Aorta (tissue), 5 donors: ENCODE measurements at regions of chr7 and their contacts with region 1.

Region 1: GRCh38 chr7:154927624-154928143 is 75.2 kb downstream of the PAXIP1 start:
- DNase-seq: peak in 1 of 2 donors; percentile 81
- ATAC-seq: peak; percentile 90
- H3K4me3 ChIP-seq: peak overlapping the region; percentile 71 to 83
- H3K27ac ChIP-seq: peak overlapping the region; percentile 9 to 90
- H3K4me1 ChIP-seq: no peaks in the 10 kb centered on the region
- H3K27me3 ChIP-seq: no peaks in the 10 kb centered on the region

Region 2: DNA sequence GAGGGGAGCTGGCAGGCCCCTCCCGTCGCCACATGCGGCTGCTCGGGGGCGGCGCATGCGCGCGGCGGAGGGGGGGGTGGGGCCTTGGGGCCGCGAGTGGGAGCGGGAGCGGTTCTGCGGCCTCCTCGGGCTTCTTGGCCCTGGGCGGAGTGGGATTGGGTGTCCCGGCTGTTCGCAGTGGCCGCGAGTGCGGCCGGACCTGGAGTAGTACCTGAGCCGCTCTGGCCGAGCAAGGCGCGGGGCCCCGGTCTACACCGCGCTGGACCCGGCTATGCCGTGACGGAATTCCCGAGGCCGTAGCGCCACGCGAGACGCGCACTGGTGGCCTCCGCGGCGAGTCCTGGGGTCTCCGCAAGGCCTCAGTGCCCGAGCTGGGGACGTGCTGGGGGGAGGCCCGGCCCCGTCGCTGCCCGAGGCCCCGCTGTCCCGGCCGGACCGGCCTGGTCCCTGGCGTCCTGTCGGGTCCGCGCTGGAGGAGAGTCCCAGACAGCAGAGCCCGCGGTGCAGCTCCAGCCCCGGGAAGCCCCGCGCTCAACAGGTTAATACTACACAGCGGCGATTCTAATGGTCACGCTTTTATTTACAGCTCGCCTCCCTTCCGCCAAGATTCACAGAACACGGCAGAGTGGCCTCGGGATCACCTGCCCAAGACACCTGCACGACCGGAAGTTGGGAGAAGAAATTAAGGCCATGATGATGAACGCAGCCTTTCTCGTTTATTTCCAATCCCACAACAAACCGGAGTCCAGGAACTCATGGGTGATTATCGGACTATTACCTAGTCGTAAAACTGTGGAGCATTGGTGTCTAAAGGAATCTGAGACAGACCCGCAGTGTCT is 75.9 kb after region 1 on chr7:
- intact Hi-C with region 1: loop called (anchors 5 kb)
- DNase-seq: peak; percentile 85 to 91
- ATAC-seq: peak; percentile 98
- H3K4me3 ChIP-seq: peak overlapping the region; percentile 95 to 96
- H3K27ac ChIP-seq: peak overlapping the region in 1 of 2 donors; percentile 43
- H3K4me1 ChIP-seq: no peaks in the 10 kb centered on the region
- H3K27me3 ChIP-seq: no peaks in the 10 kb centered on the region

Region 3: GRCh38 chr7:155043756-155044155 is 116.1 kb after region 1 on chr7:
- intact Hi-C with region 1: no loop called
- DNase-seq: no peak
- ATAC-seq: no peak
- H3K4me3 ChIP-seq: no peak overlapping the region
- H3K27ac ChIP-seq: no peak overlapping the region
- H3K4me1 ChIP-seq: no peaks in the 10 kb centered on the region
- H3K27me3 ChIP-seq: no peaks in the 10 kb centered on the region

Region 4: DNA sequence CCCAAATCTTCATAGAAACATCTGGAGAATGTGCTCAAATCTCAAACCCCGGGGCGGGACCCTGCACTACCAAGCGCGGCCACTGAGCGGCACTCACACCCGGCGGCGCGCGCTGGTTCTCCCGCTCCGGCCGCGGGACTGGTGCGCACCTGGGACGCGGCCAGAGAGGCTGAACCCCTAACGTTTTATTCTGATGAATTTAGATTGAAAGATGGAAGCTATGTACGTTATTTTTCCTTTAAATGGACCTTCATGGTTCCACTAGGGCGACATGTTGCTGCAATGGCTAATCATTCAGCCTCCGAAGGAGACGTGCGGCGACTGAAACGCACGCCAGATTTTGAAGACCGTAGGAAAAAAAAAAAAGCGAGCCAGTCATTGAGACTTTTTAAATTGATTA is 263.0 kb after region 1 on chr7:
- intact Hi-C with region 1: loop called in 1 of 2 experiments (anchors 10 kb)
- DNase-seq: peak in 1 of 2 donors; percentile 89
- ATAC-seq: peak; percentile 78
- H3K4me3 ChIP-seq: no peak overlapping the region
- H3K27ac ChIP-seq: no peak overlapping the region
- H3K4me1 ChIP-seq: no peaks in the 10 kb centered on the region
- H3K27me3 ChIP-seq: no peaks in the 10 kb centered on the region

Region 5: GRCh38 chr7:155298834-155299534 is 371.3 kb after region 1 on chr7:
- intact Hi-C with region 1: loop called in 1 of 2 experiments (anchors 5 kb)
- DNase-seq: peak; percentile 97 to 98
- ATAC-seq: peak; percentile 90
- H3K4me3 ChIP-seq: peak overlapping the region; percentile 30 to 68
- H3K27ac ChIP-seq: peak overlapping the region in 1 of 2 donors; percentile 20
- H3K4me1 ChIP-seq: no peaks in the 10 kb centered on the region
- H3K27me3 ChIP-seq: no peaks in the 10 kb centered on the region

Region 6: DNA sequence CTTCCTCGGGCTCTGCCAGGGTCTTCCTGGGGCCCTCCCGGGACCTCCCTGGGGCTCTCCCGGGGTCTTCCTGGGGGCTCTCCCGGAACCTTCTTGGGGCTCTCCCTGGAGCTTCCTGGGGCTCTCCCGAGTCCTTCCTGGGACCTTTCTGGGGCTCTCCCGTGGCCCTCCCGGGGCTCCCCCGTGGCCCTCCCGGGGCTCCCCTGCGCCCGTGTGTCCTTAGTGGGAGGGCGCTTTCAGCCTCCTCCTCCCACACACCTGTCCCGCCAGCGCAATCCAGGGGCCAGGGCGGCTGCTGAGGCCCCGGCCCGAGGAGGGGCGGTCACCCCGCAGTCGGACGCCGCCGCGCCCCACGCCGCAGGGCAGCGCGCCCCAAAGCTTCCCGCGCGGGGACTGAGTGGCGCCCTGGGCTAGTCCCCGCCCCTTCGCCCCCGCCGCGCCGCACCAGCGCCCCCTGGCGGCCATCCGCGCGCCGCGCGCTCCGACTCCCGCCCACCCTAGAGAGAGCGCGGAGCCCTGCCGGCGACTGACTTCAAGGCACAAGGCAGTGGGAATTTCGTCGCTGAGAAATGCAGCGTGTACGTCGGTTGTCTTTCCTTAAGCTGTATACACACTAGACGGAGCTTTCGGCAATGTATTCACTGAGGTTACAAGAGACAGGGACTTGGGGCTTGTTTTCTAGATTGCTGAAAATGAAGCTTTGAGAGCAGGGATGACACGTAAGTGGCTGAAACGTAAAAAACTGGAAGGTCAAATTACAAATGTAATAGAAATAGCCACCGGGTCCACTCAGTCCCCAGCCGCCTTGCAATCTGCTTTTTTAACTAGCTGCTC is 417.1 kb after region 1 on chr7:
- intact Hi-C with region 1: loop called (anchors 2 to 5 kb)
- DNase-seq: peak; percentile 78 to 93
- ATAC-seq: peak; percentile 94
- H3K4me3 ChIP-seq: no peak overlapping the region
- H3K27ac ChIP-seq: no peak overlapping the region
- H3K4me1 ChIP-seq: no peaks in the 10 kb centered on the region
- H3K27me3 ChIP-seq: no peaks in the 10 kb centered on the region